ENCODE measurements at regions of chr12 and their contacts with region 1.

Region 1: GRCh38 chr12:91326058-91327027 is 143.7 kb upstream of the DCN start:
- DNase-seq: peak; percentile 25
- CTCF ChIP-seq: peak; percentile 70

Region 2: GRCh38 chr12:91178139-91178561 is 148.2 kb before region 1 on chr12:
- in situ Hi-C with region 1: loop called (anchors 25 kb)
- DNase-seq: no peak
- CTCF ChIP-seq: peak; percentile 38

Region 3: DNA sequence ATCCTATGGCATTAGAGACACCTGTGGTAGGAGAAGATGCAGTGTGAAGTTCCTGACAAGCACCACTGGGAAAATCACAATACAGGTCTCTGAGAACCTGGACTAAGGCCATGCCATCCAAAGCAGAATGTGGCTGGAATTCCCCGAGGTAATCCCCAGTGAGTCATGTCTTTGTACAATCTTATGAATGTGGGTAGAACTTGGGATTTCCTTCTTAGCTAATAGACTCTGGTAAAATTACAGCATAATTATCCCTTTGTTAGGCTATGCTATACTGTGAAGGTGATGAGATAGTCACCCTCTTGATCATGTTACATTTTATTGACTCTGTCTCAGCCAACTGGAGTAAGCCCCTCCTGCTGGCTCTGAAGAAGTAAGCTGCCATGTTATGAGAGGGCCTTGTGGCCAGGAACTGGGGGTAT is 80.6 kb after region 1 on chr12:
- in situ Hi-C with region 1: no loop called
- DNase-seq: peak; percentile 12
- CTCF ChIP-seq: no peak

Measured in GM13977 (cell line).